Motor neuron (in vitro differentiated cells): ENCODE measurements at regions of chr7 and their contacts with region 1.

Region 1: GRCh38 chr7:81469869-81470723 is 299.8 kb downstream of the HGF start:
- ATAC-seq: peak; percentile 84 to 98 (median 93)
- H3K4me3 ChIP-seq: no peak overlapping the region
- H3K27ac ChIP-seq: no peak overlapping the region
- H3K4me1 ChIP-seq: peaks cover 19 to 22% of the 10 kb centered on the region in 2 donors

Region 2: GRCh38 chr7:80060218-80060806 is 1409.8 kb before region 1 on chr7:
- in situ Hi-C with region 1: loop called in 1 of 9 experiments (anchors 25 kb)
- ATAC-seq: peak in 3 of 8 experiments; percentile 42 to 48 (median 46)
- H3K4me3 ChIP-seq: no peak overlapping the region
- H3K27ac ChIP-seq: no peak overlapping the region
- H3K4me1 ChIP-seq: no peaks in the 10 kb centered on the region

Region 3: DNA sequence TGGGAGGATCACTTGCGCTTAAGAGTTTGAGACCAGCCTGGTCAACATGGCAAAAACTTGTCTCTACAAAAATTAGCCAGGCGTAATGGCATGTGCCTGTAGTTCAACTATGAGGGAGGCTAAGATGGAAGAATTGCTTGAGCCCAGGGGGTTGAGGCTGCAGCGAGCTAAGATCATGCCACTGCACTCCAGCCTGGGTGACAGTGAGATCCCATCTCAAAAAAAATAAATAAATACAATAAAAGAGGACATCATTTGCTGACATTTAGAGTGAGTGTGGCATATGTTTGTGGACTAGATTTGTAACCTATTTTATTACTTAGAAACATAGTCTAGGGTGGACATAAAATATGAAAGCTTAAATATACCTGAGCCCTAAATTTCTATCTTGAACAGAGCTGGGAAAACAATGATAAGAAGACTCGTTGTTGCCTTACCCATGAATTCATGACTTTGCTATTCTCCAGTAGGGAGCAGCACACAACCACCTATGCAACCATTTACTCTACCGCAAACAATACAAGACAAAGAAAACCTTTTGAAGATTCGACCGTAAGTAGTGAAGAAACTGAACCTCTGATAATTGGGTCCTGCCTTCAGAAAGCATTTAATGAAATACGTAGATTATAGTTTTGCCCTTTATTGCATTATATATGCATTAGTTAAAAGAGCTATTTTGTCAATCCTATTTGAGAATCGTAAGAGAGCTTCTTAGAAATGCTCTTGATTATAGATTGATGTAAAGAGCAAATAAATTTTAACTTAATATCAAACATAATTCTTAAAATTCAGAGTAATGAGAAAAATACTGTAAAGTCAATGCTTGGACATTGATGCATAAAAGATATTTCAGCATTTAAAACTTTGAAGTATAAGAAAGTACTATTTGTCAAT is 1041.7 kb before region 1 on chr7:
- in situ Hi-C with region 1: loop called in 1 of 9 experiments (anchors 25 kb)
- ATAC-seq: peak in 5 of 8 experiments; percentile 43 to 95 (median 83)
- H3K4me3 ChIP-seq: no peak overlapping the region
- H3K27ac ChIP-seq: no peak overlapping the region
- H3K4me1 ChIP-seq: no peaks in the 10 kb centered on the region

Region 4: DNA sequence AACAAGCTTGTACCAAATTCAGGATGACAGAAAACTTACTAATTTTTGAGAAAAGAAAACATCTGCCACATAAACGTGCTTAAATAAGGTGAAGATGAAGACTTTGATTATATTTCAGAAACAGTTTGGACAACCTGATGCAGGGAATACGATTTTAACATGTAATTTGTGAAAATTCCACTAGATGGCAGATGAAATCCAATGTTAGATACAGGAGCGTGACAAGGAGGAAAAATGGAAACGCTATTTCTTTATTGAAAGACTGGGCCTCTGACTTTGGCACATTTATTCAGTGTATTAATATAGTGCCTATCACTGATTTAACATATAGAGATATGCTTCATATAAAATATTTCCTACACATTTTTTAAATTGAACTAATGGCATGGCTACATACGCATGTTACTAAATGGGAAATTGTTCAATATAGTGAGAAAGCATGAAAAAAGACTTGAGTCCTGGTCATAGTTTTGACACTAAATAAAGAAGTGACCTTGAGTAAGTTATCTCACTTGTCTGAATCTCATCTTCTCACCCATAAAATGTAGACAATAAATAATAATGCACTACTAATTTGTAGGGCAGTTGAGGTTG is 771.0 kb before region 1 on chr7:
- in situ Hi-C with region 1: loop called in 6 of 9 experiments (anchors 10 to 25 kb)
- ATAC-seq: peak in 7 of 8 experiments; percentile 42 to 68 (median 53)
- H3K4me3 ChIP-seq: no peak overlapping the region
- H3K27ac ChIP-seq: no peak overlapping the region
- H3K4me1 ChIP-seq: peaks cover 4 to 7% of the 10 kb centered on the region in 2 donors

Region 5: GRCh38 chr7:80722616-80723141 is 747.4 kb before region 1 on chr7:
- in situ Hi-C with region 1: loop called in 2 of 9 experiments (anchors 25 kb)
- ATAC-seq: peak; percentile 29 to 87 (median 45)
- H3K4me3 ChIP-seq: no peak overlapping the region
- H3K27ac ChIP-seq: no peak overlapping the region
- H3K4me1 ChIP-seq: peaks cover 42 to 51% of the 10 kb centered on the region in 2 donors

Region 6: GRCh38 chr7:80918909-80919662 is 551.0 kb before region 1 on chr7 and contains the start of gene SEMA3C:
- in situ Hi-C with region 1: loop called in 4 of 9 experiments (anchors 25 kb)
- ATAC-seq: peak; percentile 95 to 99 (median 96)
- H3K4me3 ChIP-seq: peak within 1 kb of the TSS; percentile 47 to 57 (median 51)
- H3K27ac ChIP-seq: peak within 1 kb of the TSS; percentile 8 to 69
- H3K4me1 ChIP-seq: peaks cover 12 to 28% of the 10 kb centered on the region in 2 donors
- total RNA-seq, gene SEMA3C: 32.2 to 219 (median 49.9) TPM